BJ (cell line): ENCODE measurements at regions of chr3 and their contacts with region 1.

Region 1: GRCh38 chr3:8938021-8938420 is 25.3 kb downstream of the RAD18 start:
- DNase-seq: no peak
- H3K4me3 ChIP-seq: no peak overlapping the region
- H3K27me3 ChIP-seq: no peaks in the 10 kb centered on the region
- CTCF ChIP-seq: peak; percentile 50

Region 2: GRCh38 chr3:8963137-8963869 is 25.3 kb after region 1 on chr3 and contains the start of gene RAD18:
- CTCF ChIA-PET with region 1: interaction called, 10 read pairs
- POLR2A ChIA-PET with region 1: no interaction called
- DNase-seq: peak; percentile 37
- H3K4me3 ChIP-seq: peak within 1 kb of the TSS; percentile 73
- H3K27me3 ChIP-seq: no peaks in the 10 kb centered on the region
- CTCF ChIP-seq: no peak
- polyA plus RNA-seq, gene RAD18: 13.8 and 17.4 TPM in 2 replicates

Region 3: GRCh38 chr3:9074079-9074478 is 136.1 kb after region 1 on chr3:
- CTCF ChIA-PET with region 1: no interaction called
- POLR2A ChIA-PET with region 1: no interaction called
- DNase-seq: no peak
- H3K4me3 ChIP-seq: no peak overlapping the region
- H3K27me3 ChIP-seq: peaks cover 9% of the 10 kb centered on the region
- CTCF ChIP-seq: no peak